ENCODE measurements at regions of chr11 and their contacts with region 1.

Region 1: DNA sequence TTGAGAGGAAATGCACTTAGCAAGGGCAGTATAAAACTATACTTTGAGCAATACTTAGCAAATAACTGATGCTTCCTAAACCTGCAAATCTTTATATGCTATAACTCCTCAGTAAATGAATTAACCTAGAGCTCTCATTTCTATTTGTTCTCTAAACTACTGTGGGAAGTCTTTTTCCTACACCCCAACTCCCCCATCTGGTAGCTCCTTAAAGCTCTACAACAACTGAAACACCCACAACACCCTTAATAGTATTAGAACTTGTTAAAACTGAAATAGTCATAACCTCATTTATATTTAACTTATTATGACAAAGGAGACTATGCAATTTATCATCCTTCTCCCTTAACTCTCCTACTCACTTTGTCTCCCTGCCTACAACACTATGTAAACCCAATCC is 43.4 kb downstream of the GUCY1A2 start:
- DNase-seq: peak in 1 of 2 experiments; percentile 11
- H3K4me3 ChIP-seq: no peak overlapping the region
- H3K4me3 Mint-ChIP-seq: no peak overlapping the region
- H3K27ac Mint-ChIP-seq: no peak overlapping the region
- H3K4me1 ChIP-seq: no peaks in the 10 kb centered on the region
- H3K4me1 Mint-ChIP-seq: no peaks in the 10 kb centered on the region
- H3K27me3 ChIP-seq: no peaks in the 10 kb centered on the region
- H3K27me3 Mint-ChIP-seq: no peaks in the 10 kb centered on the region
- CTCF ChIP-seq: peak; percentile 17 to 38

Region 2: DNA sequence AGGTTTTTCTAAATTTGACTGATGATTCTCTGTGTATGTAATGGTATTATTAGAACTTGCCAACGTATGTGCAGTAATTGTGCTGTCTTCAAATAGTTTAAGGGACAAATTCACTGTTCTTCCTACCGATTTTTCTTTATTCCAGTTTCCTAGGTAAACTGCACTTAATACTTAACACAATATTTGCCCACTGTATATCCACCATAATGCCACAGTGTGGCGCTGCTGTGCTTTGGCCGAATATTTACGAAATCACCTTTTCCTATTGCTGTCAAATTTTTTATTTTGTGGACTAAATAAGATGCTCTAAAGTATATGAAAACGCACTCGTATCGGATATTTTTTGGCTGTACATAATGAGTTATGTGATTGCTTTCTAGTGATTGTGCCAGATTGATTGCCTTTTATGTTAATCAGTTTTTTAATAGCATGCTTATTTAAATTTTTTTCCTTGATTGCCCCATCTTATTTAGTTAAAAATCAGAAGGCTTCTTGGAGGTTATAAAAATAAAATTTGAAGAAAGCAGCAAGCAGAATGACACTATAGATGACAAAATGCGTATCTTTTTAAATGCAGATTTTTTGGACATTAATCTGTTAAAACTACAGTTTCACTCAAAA is 886.9 kb before region 1 on chr11:
- CTCF ChIA-PET with region 1: no interaction called
- POLR2A ChIA-PET with region 1: no interaction called
- intact Hi-C with region 1: loop called (anchors 2 kb)
- DNase-seq: peak; percentile 57 to 70
- H3K4me3 ChIP-seq: no peak overlapping the region
- H3K4me3 Mint-ChIP-seq: no peak overlapping the region
- H3K27ac Mint-ChIP-seq: no peak overlapping the region
- H3K4me1 ChIP-seq: peaks cover 6% of the 10 kb centered on the region
- H3K4me1 Mint-ChIP-seq: peaks cover 25% of the 10 kb centered on the region
- H3K27me3 ChIP-seq: no peaks in the 10 kb centered on the region
- H3K27me3 Mint-ChIP-seq: no peaks in the 10 kb centered on the region
- CTCF ChIP-seq: peak; percentile 96 to 99

Region 3: GRCh38 chr11:106724293-106724892 is 250.4 kb before region 1 on chr11:
- CTCF ChIA-PET with region 1: no interaction called
- POLR2A ChIA-PET with region 1: no interaction called
- intact Hi-C with region 1: loop called (anchors 2 kb)
- DNase-seq: no peak
- H3K4me3 ChIP-seq: no peak overlapping the region
- H3K4me3 Mint-ChIP-seq: no peak overlapping the region
- H3K27ac Mint-ChIP-seq: no peak overlapping the region
- H3K4me1 ChIP-seq: no peaks in the 10 kb centered on the region
- H3K4me1 Mint-ChIP-seq: peaks cover 14% of the 10 kb centered on the region
- H3K27me3 ChIP-seq: no peaks in the 10 kb centered on the region
- H3K27me3 Mint-ChIP-seq: no peaks in the 10 kb centered on the region
- CTCF ChIP-seq: no peak

Region 4: DNA sequence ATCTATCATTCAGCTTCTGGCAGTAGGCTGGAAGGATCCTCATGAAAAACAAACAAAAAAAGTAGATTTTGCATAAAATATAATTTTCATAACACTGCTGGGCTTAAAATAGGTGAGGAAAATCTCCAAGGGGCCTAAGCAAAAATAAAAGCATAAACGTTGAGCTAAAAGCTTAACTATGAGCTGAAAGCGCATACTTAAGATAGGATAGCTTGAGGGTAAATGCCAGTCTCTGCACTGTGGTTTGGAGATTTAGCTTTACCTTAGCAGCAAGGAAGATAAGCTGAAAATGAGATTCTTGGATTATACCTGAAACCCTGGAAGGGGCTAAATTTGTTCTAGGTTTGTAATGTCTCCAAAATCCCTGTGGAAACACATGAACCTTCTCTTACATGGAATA is 140.3 kb before region 1 on chr11:
- CTCF ChIA-PET with region 1: no interaction called
- POLR2A ChIA-PET with region 1: no interaction called
- intact Hi-C with region 1: loop called (anchors 5 kb)
- DNase-seq: peak in 1 of 2 experiments; percentile 17
- H3K4me3 ChIP-seq: no peak overlapping the region
- H3K4me3 Mint-ChIP-seq: no peak overlapping the region
- H3K27ac Mint-ChIP-seq: no peak overlapping the region
- H3K4me1 ChIP-seq: peaks cover 35% of the 10 kb centered on the region
- H3K4me1 Mint-ChIP-seq: peaks cover 15% of the 10 kb centered on the region
- H3K27me3 ChIP-seq: no peaks in the 10 kb centered on the region
- H3K27me3 Mint-ChIP-seq: no peaks in the 10 kb centered on the region
- CTCF ChIP-seq: no peak